ENCODE measurements at regions of chr5 and their contacts with region 1.

Region 1: DNA sequence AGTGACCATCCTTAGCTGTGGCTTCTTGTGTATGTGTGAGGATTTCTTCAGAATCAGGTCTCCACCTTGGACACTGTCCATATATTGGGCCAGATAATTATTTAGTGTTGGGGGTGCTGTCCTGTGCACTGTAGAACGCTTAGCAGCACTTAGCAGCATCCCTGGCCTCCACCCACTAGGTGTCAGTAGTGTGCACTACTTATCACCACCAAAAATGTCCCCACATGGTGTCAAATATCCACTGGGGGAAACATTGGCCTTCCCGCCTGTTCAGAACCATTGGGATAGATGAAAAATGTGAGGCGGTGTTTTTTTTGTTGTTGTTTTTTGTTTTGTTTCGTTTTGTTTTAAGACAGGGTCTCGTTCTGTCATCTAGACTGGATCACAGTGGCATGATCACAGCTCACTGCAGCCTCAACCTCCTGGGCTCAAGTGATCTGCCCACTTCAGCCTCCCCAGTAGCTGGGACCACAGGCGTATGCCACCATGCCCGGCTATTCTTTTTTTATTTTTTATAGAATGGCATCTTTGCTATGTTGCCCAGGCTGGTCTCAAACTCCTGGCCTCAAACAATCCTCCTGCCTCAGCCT is 67.7 kb downstream of the TENT4A start:
- DNase-seq: peak; percentile 62
- ATAC-seq: peak; percentile 79
- H3K4me3 Mint-ChIP-seq: no peak overlapping the region
- H3K27ac Mint-ChIP-seq: no peak overlapping the region
- H3K4me1 Mint-ChIP-seq: peaks cover 6% of the 10 kb centered on the region
- H3K27me3 Mint-ChIP-seq: peaks cover 9% of the 10 kb centered on the region
- CTCF ChIP-seq: peak; percentile 68

Region 2: DNA sequence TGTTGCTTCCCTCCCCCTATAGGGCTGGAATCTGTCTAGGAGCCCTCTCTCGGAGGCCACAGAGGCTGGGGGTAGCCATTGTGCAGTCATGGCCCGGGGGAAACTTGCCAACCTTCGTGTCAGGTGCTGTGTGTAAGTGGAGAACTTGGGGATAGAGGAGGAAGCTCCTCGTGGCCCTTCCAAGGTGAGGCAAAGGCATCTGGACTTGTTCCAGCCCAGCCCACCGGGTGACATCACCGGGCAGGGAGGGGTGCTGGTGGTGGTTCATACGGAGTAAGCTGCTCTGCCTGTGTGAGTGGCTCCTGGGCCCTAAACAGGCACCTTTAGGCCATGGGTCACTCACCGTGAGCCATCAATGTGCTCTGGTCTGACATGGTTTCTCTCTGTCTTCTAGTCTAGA is 112.2 kb before region 1 on chr5:
- CTCF ChIA-PET with region 1: no interaction called
- POLR2A ChIA-PET with region 1: no interaction called
- intact Hi-C with region 1: no loop called
- DNase-seq: no peak
- ATAC-seq: no peak
- H3K4me3 Mint-ChIP-seq: no peak overlapping the region
- H3K27ac Mint-ChIP-seq: no peak overlapping the region
- H3K4me1 Mint-ChIP-seq: no peaks in the 10 kb centered on the region
- H3K27me3 Mint-ChIP-seq: no peaks in the 10 kb centered on the region
- CTCF ChIP-seq: no peak

Region 3: GRCh38 chr5:6792911-6793471 is 12.1 kb after region 1 on chr5:
- CTCF ChIA-PET with region 1: interaction called, 10 read pairs
- POLR2A ChIA-PET with region 1: no interaction called
- intact Hi-C with region 1: no loop called
- DNase-seq: no peak
- ATAC-seq: no peak
- H3K4me3 Mint-ChIP-seq: no peak overlapping the region
- H3K27ac Mint-ChIP-seq: no peak overlapping the region
- H3K4me1 Mint-ChIP-seq: peaks cover 6% of the 10 kb centered on the region
- H3K27me3 Mint-ChIP-seq: peaks cover 5% of the 10 kb centered on the region
- CTCF ChIP-seq: no peak